ENCODE measurements at regions of chr13 and their contacts with region 1.

Region 1: DNA sequence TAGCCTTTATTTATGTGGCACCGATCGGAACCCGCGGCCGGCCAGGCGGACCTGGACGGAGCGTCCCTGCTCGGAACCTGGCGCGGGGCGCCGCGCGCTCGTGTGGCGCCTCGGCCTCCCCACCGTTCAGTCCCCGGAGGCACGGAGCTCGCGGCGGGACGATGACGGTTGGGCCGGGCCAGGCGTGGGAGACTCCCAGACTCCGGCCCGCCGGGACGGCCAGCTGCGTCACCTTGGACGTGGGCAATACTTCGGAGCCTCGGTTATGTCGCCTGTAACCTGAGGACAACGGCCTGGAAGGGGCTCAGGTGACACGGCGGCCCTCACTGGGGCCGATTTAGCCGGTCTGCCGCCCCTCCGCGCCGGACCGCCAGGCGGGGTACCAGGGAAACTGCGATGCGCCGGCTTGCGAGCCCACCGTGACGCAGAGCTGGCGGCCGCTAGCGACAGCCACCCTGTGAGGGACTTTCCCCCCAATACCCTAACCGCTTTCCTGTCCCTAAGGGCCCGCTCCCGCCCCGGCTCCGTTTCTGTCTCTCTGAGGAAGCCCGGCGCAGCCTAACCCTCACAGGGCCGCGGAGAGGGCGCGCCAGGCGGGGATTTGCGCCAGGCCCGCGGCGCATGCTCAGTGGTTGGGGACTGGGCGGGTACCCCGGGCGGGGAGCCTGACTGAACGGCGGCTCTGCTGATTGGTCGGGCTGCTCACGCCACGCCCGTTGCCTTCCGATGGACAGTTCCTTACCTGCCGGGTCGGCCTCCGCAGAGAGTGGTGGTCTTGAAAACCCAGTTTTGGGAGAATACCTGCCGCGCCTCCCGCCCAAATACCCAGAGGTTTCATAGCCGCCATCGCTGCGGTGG is 109.5 kb upstream of the DOCK9 start:
- DNase-seq: peak; percentile 94
- H3K4me3 Mint-ChIP-seq: peak overlapping the region; percentile 99
- H3K27ac Mint-ChIP-seq: peak overlapping the region; percentile 97
- H3K4me1 Mint-ChIP-seq: peaks cover 30% of the 10 kb centered on the region
- H3K27me3 Mint-ChIP-seq: no peaks in the 10 kb centered on the region

Region 2: GRCh38 chr13:98910501-98910951 is 176.8 kb before region 1 on chr13:
- CTCF ChIA-PET with region 1: interaction called, 5 read pairs
- intact Hi-C with region 1: loop called (anchors 5 kb)
- DNase-seq: peak; percentile 72
- H3K4me3 Mint-ChIP-seq: peak overlapping the region; percentile 14
- H3K27ac Mint-ChIP-seq: peak overlapping the region; percentile 90
- H3K4me1 Mint-ChIP-seq: peaks cover 63% of the 10 kb centered on the region
- H3K27me3 Mint-ChIP-seq: no peaks in the 10 kb centered on the region

Region 3: DNA sequence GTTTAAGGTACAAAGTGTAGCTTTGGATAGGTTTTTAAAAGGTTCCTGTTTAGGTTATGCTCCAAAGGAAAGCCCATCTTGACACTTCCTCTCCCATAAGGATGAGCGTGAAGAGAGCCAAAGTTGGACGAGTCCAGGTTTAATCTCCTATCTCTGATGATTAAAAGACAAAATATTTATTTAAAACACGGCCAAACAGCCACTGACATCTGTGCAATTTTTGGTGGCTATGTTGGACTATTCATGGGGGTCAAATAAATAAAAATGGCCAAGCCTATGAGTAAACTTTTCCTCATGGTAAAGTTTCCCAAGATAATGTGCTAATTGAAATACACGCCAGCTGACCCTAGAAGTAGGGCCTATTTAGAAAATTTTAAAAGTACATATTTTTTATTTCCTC is 40.5 kb before region 1 on chr13:
- CTCF ChIA-PET with region 1: interaction called, 5 read pairs
- intact Hi-C with region 1: loop called (anchors 1 kb)
- DNase-seq: no peak
- H3K4me3 Mint-ChIP-seq: peak overlapping the region; percentile 68
- H3K27ac Mint-ChIP-seq: peak overlapping the region; percentile 95
- H3K4me1 Mint-ChIP-seq: peaks cover 91% of the 10 kb centered on the region
- H3K27me3 Mint-ChIP-seq: no peaks in the 10 kb centered on the region

Region 4: DNA sequence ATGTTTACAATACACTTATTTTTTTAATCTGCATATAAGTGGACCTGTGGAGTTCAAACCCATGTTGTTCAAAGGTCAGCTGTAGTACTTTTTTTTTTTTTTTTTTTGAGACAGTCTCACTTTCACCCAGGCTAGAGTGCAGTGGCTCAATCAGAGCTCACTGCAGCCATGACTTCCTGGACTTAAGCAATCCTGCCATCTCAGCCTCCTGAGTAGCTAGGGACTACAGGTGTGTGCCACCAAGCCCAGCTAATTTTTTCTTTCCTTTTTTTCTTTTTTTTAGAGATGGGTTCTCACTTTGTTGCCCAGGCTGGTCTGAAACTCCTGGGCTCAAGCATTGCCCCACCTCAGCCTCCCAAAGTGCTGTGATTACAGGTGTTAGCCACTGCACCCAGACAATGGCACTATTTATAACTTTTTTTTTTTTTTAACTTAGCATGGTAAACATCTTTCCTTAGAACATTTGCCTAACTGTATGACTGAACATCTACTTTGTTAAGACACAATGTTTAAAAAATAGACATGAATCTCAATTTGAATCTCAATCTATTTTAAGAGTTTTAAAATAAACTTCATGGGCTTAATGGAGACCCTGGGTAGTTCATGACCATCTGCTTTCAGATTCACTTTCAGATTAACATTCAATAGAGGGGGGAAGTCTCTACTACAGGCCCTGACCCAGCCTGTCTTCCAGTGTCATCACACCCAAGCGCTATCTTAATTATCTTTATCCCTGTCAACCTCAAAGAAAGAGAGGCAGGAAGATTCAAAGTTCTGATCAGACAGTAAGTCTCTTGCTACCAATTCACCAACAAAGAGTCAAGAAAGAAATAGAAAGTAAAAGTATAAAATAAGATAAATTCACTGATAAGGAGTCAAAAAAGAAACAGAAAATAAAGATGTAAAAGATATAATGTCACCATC is 11.8 kb before region 1 on chr13:
- CTCF ChIA-PET with region 1: interaction called, 7 read pairs
- intact Hi-C with region 1: loop called (anchors 1 kb)
- DNase-seq: no peak
- H3K4me3 Mint-ChIP-seq: peak overlapping the region; percentile 62
- H3K27ac Mint-ChIP-seq: peak overlapping the region; percentile 89
- H3K4me1 Mint-ChIP-seq: peaks cover 60% of the 10 kb centered on the region
- H3K27me3 Mint-ChIP-seq: no peaks in the 10 kb centered on the region

Region 5: GRCh38 chr13:99124794-99125316 is 37.5 kb after region 1 on chr13:
- CTCF ChIA-PET with region 1: no interaction called
- intact Hi-C with region 1: loop called (anchors 1 kb)
- DNase-seq: peak; percentile 23
- H3K4me3 Mint-ChIP-seq: peak overlapping the region; percentile 35
- H3K27ac Mint-ChIP-seq: no peak overlapping the region
- H3K4me1 Mint-ChIP-seq: peaks cover 42% of the 10 kb centered on the region
- H3K27me3 Mint-ChIP-seq: no peaks in the 10 kb centered on the region

Region 6: DNA sequence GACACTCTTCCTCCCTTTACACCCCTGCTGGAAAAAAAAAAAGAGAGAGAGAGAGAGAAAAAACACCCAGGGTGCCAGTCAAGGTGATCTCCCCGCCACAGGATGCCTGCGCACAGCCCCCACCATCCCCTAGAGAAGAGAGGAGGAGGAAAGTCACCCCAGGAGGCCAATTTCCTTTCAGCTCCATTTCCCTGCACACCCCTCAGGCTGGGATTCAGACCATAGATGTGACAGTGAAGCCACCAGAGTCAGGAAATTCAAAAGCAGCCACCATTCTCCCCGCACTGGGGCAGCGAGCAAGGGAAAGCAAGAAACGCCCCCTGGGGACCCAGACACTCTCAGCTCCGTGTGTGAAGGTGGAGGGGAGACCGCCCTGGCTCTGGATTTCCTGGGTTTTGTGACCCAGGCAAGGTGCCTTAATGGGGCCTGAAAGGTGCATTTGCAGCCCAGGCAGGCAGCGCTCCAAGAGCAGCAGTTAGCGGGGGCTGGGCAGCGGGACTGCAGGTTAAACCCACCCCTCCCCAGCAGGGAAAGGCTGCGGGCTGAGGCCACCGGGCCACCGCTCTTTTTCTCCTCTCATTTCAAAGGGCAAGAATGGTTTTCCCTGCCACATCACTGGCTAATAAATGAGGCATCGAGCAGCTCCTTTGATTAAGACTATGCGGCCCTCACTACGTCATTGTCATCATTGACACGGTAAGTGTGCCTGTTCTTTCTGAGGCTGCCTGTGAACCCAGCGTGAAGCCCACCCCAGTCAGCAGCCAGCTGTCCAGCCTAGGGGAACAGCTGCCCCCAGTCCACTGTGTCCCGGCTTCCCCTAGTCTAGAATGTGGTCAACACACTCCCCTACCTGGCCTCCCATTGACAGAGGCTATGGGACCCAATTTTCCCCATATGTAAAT is 330.1 kb after region 1 on chr13:
- CTCF ChIA-PET with region 1: no interaction called
- intact Hi-C with region 1: loop called (anchors 5 kb)
- DNase-seq: peak; percentile 71
- H3K4me3 Mint-ChIP-seq: no peak overlapping the region
- H3K27ac Mint-ChIP-seq: no peak overlapping the region
- H3K4me1 Mint-ChIP-seq: peaks cover 64% of the 10 kb centered on the region
- H3K27me3 Mint-ChIP-seq: peaks cover 2% of the 10 kb centered on the region

Measured in activated naive CD4-positive, alpha-beta T cell treated with anti-CD3 and anti-CD28 coated beads for 36 hours (primary cell).